Activated B cell treated with CpG ODN at 0.5 μM for 24 hours (primary cell): ENCODE measurements at regions of chr3 and their contacts with region 1.

Region 1: GRCh38 chr3:136899622-136900158 is 37.7 kb downstream of the NCK1 start:
- DNase-seq: no peak
- ATAC-seq: no peak
- H3K4me3 Mint-ChIP-seq: peak overlapping the region; percentile 29
- H3K27ac Mint-ChIP-seq: peak overlapping the region; percentile 6
- H3K4me1 Mint-ChIP-seq: peaks cover 65% of the 10 kb centered on the region
- H3K27me3 Mint-ChIP-seq: no peaks in the 10 kb centered on the region
- CTCF ChIP-seq: no peak

Region 2: GRCh38 chr3:136885357-136886213 is 14.1 kb before region 1 on chr3:
- CTCF ChIA-PET with region 1: no interaction called
- POLR2A ChIA-PET with region 1: no interaction called
- intact Hi-C with region 1: loop called (anchors 2 kb)
- DNase-seq: no peak
- ATAC-seq: peak; percentile 37
- H3K4me3 Mint-ChIP-seq: peak overlapping the region; percentile 17
- H3K27ac Mint-ChIP-seq: peak overlapping the region; percentile 62
- H3K4me1 Mint-ChIP-seq: peaks cover 68% of the 10 kb centered on the region
- H3K27me3 Mint-ChIP-seq: no peaks in the 10 kb centered on the region
- CTCF ChIP-seq: no peak

Region 3: GRCh38 chr3:136938334-136938733 is 38.6 kb after region 1 on chr3:
- CTCF ChIA-PET with region 1: no interaction called
- POLR2A ChIA-PET with region 1: interaction called, 9 read pairs
- intact Hi-C with region 1: loop called (anchors 5 kb)
- DNase-seq: no peak
- ATAC-seq: no peak
- H3K4me3 Mint-ChIP-seq: no peak overlapping the region
- H3K27ac Mint-ChIP-seq: no peak overlapping the region
- H3K4me1 Mint-ChIP-seq: peaks cover 64% of the 10 kb centered on the region
- H3K27me3 Mint-ChIP-seq: no peaks in the 10 kb centered on the region
- CTCF ChIP-seq: no peak